ENCODE measurements at regions of chr3 and their contacts with region 1.

Region 1: GRCh38 chr3:15268033-15268631 is 62.1 kb downstream of the CAPN7 start:
- DNase-seq: peak; percentile 89
- ATAC-seq: peak; percentile 67
- H3K4me3 Mint-ChIP-seq: no peak overlapping the region
- H3K27ac Mint-ChIP-seq: no peak overlapping the region
- H3K4me1 Mint-ChIP-seq: peaks cover 54% of the 10 kb centered on the region
- H3K27me3 Mint-ChIP-seq: peaks cover 2% of the 10 kb centered on the region

Region 2: GRCh38 chr3:15256861-15257341 is 11.2 kb before region 1 on chr3:
- CTCF ChIA-PET with region 1: interaction called, 25 read pairs
- POLR2A ChIA-PET with region 1: no interaction called
- DNase-seq: no peak
- ATAC-seq: no peak
- H3K4me3 Mint-ChIP-seq: no peak overlapping the region
- H3K27ac Mint-ChIP-seq: no peak overlapping the region
- H3K4me1 Mint-ChIP-seq: peaks cover 6% of the 10 kb centered on the region
- H3K27me3 Mint-ChIP-seq: no peaks in the 10 kb centered on the region

Region 3: DNA sequence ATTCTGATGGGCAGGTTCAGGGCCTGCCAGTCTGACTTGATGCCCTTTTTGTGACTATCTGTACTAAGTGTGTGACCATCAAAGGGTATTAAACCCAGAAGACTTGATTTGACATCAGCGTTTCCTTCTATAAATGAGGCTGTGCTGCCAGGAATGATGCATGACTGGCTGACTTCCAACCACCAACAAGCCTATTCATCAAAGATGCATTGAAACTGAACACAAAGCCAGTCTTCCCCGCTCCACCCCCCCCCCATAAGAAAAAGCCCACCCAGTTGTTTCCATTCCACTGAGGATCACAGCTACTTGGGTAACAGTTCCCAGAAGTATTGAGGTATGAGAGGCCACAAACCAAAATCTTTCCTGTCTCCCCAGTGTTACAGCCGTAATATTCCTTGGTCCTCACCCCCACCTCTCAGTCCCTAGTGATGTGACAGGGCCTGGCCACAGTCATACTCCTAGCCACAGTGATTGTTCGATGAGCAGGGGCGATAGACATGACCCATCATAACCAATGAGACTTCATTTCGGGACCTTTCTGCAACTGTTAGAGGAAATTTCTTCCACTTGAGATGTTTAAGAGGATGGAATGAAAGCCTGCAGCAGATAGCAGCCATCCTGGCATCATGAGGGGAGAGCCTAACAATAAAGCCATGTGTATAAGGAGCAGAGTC is 41.7 kb after region 1 on chr3:
- CTCF ChIA-PET with region 1: interaction called, 19 read pairs
- POLR2A ChIA-PET with region 1: no interaction called
- DNase-seq: no peak
- ATAC-seq: no peak
- H3K4me3 Mint-ChIP-seq: no peak overlapping the region
- H3K27ac Mint-ChIP-seq: peak overlapping the region; percentile 40
- H3K4me1 Mint-ChIP-seq: peaks cover 40% of the 10 kb centered on the region
- H3K27me3 Mint-ChIP-seq: no peaks in the 10 kb centered on the region

Region 4: GRCh38 chr3:15332405-15333098 is 64.4 kb after region 1 on chr3 and contains the start of gene SH3BP5:
- CTCF ChIA-PET with region 1: interaction called, 168 read pairs
- POLR2A ChIA-PET with region 1: interaction called, 4 read pairs
- DNase-seq: peak; percentile 76
- ATAC-seq: peak; percentile 95
- H3K4me3 Mint-ChIP-seq: peak within 1 kb of the TSS; percentile 84
- H3K27ac Mint-ChIP-seq: peak within 1 kb of the TSS; percentile 71
- H3K4me1 Mint-ChIP-seq: peaks cover 34% of the 10 kb centered on the region
- H3K27me3 Mint-ChIP-seq: peaks cover 25% of the 10 kb centered on the region
- total RNA-seq, gene SH3BP5: 12.6 to 15.0 TPM

Region 5: GRCh38 chr3:15372918-15373317 is 104.8 kb after region 1 on chr3:
- CTCF ChIA-PET with region 1: interaction called, 123 read pairs
- POLR2A ChIA-PET with region 1: no interaction called
- DNase-seq: no peak
- ATAC-seq: no peak
- H3K4me3 Mint-ChIP-seq: no peak overlapping the region
- H3K27ac Mint-ChIP-seq: no peak overlapping the region
- H3K4me1 Mint-ChIP-seq: peaks cover 7% of the 10 kb centered on the region
- H3K27me3 Mint-ChIP-seq: peaks cover 9% of the 10 kb centered on the region

Region 6: DNA sequence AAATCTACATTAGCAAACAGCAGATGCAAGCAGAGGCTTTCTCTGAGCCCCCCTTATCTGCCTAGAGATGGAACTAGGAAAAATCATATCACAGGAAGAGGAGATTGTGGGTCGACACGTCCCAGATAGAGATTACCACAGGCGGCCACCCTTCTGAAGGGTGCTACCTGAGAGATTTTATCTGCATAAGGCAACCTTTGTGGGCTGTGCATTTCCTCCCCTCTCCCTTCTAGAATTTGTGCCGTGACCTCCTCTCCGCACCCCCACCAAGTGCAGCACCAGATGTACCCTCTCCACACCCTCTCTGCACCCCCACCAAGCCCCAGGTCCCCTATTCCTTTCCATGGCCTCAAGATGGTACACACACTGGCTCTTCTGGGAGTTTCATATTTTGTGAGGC is 131.8 kb after region 1 on chr3:
- CTCF ChIA-PET with region 1: interaction called, 147 read pairs
- POLR2A ChIA-PET with region 1: no interaction called
- DNase-seq: peak; percentile 46
- ATAC-seq: peak; percentile 87
- H3K4me3 Mint-ChIP-seq: peak overlapping the region; percentile 4
- H3K27ac Mint-ChIP-seq: no peak overlapping the region
- H3K4me1 Mint-ChIP-seq: peaks cover 34% of the 10 kb centered on the region
- H3K27me3 Mint-ChIP-seq: peaks cover 11% of the 10 kb centered on the region